GM12878 (cell line): ENCODE measurements at regions of chr9 and their contacts with region 1.

Region 1: GRCh38 chr9:127004946-127005769 is 90.6 kb downstream of the RALGPS1 start:
- DNase-seq: peak; percentile 98
- ATAC-seq: peak; percentile 85
- H3K4me3 ChIP-seq: peak overlapping the region; percentile 4; the same call in 1 of the 2 replicates
- H3K27ac ChIP-seq: peak overlapping the region; percentile 77
- H3K4me1 ChIP-seq: peaks cover 54% of the 10 kb centered on the region
- H3K27me3 ChIP-seq: no peaks in the 10 kb centered on the region
- CTCF ChIP-seq: no peak
- EP300 ChIP-seq: peak; percentile 99
- POLR2A ChIP-seq: no peak
- RAD21 ChIP-seq: peak; percentile 32

Region 2: DNA sequence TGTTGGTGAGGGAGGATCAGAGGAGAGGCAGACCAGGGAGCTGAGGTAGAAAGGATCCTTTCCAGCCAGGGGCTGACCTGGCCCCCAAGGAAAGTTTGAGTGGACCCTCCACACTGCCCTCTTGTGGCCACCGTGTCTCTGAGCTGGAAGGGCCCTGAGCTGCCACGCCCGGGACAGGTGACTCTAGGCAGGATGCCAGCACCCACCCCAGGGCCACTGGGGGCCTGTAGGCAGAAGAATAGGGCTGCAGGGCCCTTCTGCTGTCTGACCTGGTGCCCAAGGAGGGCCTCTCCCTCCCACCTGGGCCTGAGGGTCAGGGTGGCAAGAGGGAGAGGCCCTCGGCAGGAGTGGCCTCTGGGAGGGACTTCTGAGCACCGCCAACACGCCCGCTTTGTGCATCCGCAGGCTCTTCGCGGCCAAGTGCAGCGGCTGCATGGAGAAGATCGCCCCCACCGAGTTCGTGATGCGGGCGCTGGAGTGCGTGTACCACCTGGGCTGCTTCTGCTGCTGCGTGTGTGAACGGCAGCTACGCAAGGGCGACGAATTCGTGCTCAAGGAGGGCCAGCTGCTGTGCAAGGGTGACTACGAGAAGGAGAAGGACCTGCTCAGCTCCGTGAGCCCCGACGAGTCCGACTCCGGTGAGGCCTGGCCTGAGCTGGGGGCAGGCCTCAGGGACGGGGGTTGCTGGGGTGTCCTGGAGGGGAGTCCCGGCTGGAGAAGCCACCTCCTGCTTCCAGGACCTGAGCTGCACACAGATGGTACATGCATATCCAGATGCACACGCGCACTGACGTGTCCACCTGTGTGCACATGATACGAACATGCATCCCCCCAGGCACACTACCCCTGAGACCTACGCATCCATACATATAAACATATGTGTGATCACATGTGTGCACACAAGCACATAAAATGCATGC is 314.5 kb before region 1 on chr9:
- CTCF ChIA-PET with region 1: no interaction called
- POLR2A ChIA-PET with region 1: no interaction called
- RAD21 ChIA-PET with region 1: no interaction called
- SMC1A ChIA-PET with region 1: no interaction called
- in situ Hi-C with region 1: no loop called
- intact Hi-C with region 1: no loop called
- DNase-seq: no peak
- ATAC-seq: peak; percentile 92
- H3K4me3 ChIP-seq: no peak overlapping the region
- H3K27ac ChIP-seq: no peak overlapping the region
- H3K4me1 ChIP-seq: no peaks in the 10 kb centered on the region
- H3K27me3 ChIP-seq: peaks cover 0 to 2% of the 10 kb centered on the region in 2 experiments; a peak in 2 of 4 replicates
- CTCF ChIP-seq: peak; percentile 55 to 78 (median 58)
- EP300 ChIP-seq: no peak
- POLR2A ChIP-seq: no peak
- RAD21 ChIP-seq: peak; percentile 27; the same call in 1 of the 2 replicates

Region 3: DNA sequence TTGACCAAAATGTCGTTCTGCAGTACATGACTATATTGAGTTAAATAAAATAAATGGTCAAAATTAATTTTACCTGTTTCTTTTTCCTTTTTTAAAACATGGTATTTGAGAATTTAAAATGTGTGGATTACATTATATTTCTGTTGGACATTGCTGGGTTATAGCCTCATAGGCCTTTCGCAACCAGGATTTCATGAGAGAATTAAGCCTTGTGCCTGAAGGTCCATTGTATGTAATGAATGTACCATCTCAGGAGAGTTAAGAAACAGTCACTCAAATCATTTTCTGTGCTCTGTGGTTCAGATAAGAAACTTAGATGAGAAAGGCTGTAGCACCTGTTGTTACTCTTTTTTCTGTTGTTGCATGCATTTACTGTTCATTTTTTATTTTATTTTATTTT is 13.8 kb after region 1 on chr9:
- CTCF ChIA-PET with region 1: interaction called, 3 read pairs
- POLR2A ChIA-PET with region 1: interaction called, 10 read pairs
- RAD21 ChIA-PET with region 1: interaction called, 6 read pairs
- SMC1A ChIA-PET with region 1: interaction called, 17 read pairs
- in situ Hi-C with region 1: no loop called
- intact Hi-C with region 1: no loop called
- DNase-seq: no peak
- ATAC-seq: no peak
- H3K4me3 ChIP-seq: no peak overlapping the region
- H3K27ac ChIP-seq: no peak overlapping the region
- H3K4me1 ChIP-seq: peaks cover 3% of the 10 kb centered on the region; the same call in 1 of the 2 replicates
- H3K27me3 ChIP-seq: no peaks in the 10 kb centered on the region
- CTCF ChIP-seq: no peak
- EP300 ChIP-seq: no peak
- POLR2A ChIP-seq: no peak
- RAD21 ChIP-seq: no peak

Region 4: GRCh38 chr9:127049044-127049443 is 43.9 kb after region 1 on chr9:
- CTCF ChIA-PET with region 1: interaction called, 3 read pairs
- POLR2A ChIA-PET with region 1: interaction called, 3 read pairs
- RAD21 ChIA-PET with region 1: interaction called, 9 read pairs
- SMC1A ChIA-PET with region 1: interaction called, 92 read pairs
- in situ Hi-C with region 1: no loop called
- intact Hi-C with region 1: loop called (anchors 1 kb)
- DNase-seq: peak; percentile 69
- ATAC-seq: peak; percentile 81
- H3K4me3 ChIP-seq: no peak overlapping the region
- H3K27ac ChIP-seq: no peak overlapping the region
- H3K4me1 ChIP-seq: peaks cover 12% of the 10 kb centered on the region
- H3K27me3 ChIP-seq: no peaks in the 10 kb centered on the region
- CTCF ChIP-seq: peak in 2 of 3 experiments; percentile 10 to 26; a peak in 1 of 6 replicates
- EP300 ChIP-seq: no peak
- POLR2A ChIP-seq: no peak
- RAD21 ChIP-seq: peak; percentile 29

Region 5: DNA sequence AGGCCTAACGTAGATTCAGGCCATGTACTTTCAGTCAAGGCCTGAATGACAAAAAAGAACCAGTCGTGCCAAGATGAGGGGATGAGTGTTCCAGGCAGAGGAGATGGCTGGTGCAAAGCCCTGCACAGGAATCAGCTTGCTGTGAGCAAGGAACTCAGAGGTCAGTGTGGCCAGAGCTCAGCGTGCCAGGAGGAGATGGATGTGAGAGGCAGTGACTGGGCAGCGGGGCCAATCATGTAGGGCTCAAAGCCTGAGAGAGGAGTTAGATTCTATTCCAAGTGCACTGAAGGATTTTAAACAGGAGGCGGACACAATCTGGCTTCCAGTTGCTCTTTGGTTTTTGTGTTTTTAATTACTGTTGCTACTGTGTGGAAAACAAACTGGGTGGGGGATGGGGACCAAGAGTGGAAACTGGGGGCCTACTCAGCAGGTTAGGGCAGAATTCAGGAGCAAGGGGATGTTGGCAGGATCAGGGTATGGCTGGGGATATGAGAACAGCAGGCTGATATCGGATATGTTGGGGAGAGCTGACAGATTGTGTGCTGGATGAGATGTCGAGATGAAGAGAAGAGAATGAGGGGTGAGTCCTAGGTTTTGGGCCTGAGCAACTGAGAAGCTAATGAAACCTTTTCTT is 53.0 kb after region 1 on chr9:
- CTCF ChIA-PET with region 1: interaction called, 13 read pairs
- POLR2A ChIA-PET with region 1: interaction called, 9 read pairs
- RAD21 ChIA-PET with region 1: interaction called, 72 read pairs
- SMC1A ChIA-PET with region 1: interaction called, 92 read pairs
- in situ Hi-C with region 1: no loop called
- intact Hi-C with region 1: no loop called
- DNase-seq: no peak
- ATAC-seq: no peak
- H3K4me3 ChIP-seq: no peak overlapping the region
- H3K27ac ChIP-seq: no peak overlapping the region
- H3K4me1 ChIP-seq: peaks cover 5% of the 10 kb centered on the region
- H3K27me3 ChIP-seq: no peaks in the 10 kb centered on the region
- CTCF ChIP-seq: no peak
- EP300 ChIP-seq: no peak
- POLR2A ChIP-seq: no peak
- RAD21 ChIP-seq: no peak

Region 6: GRCh38 chr9:127116957-127117356 is 111.8 kb after region 1 on chr9:
- CTCF ChIA-PET with region 1: interaction called, 4 read pairs
- POLR2A ChIA-PET with region 1: interaction called, 3 read pairs
- RAD21 ChIA-PET with region 1: interaction called, 13 read pairs
- SMC1A ChIA-PET with region 1: interaction called, 16 read pairs
- in situ Hi-C with region 1: no loop called
- intact Hi-C with region 1: no loop called
- DNase-seq: no peak
- ATAC-seq: peak; percentile 50
- H3K4me3 ChIP-seq: no peak overlapping the region
- H3K27ac ChIP-seq: no peak overlapping the region
- H3K4me1 ChIP-seq: peaks cover 21% of the 10 kb centered on the region
- H3K27me3 ChIP-seq: no peaks in the 10 kb centered on the region
- CTCF ChIP-seq: no peak
- EP300 ChIP-seq: no peak
- POLR2A ChIP-seq: no peak
- RAD21 ChIP-seq: 0 out of 2 replicates have a peak, but pooled peaks have one; percentile 0

Region 7: GRCh38 chr9:127159325-127159801 is 154.2 kb after region 1 on chr9:
- CTCF ChIA-PET with region 1: interaction called, 5 read pairs
- POLR2A ChIA-PET with region 1: interaction called, 7 read pairs
- RAD21 ChIA-PET with region 1: interaction called, 157 read pairs
- SMC1A ChIA-PET with region 1: interaction called, 188 read pairs
- in situ Hi-C with region 1: no loop called
- intact Hi-C with region 1: no loop called
- DNase-seq: no peak
- ATAC-seq: peak; percentile 30; the same call in 2 of the 3 replicates
- H3K4me3 ChIP-seq: no peak overlapping the region
- H3K27ac ChIP-seq: no peak overlapping the region
- H3K4me1 ChIP-seq: peaks cover 27% of the 10 kb centered on the region
- H3K27me3 ChIP-seq: no peaks in the 10 kb centered on the region
- CTCF ChIP-seq: peak in 1 of 3 experiments; percentile 16; a peak in 1 of 6 replicates
- EP300 ChIP-seq: no peak
- POLR2A ChIP-seq: no peak
- RAD21 ChIP-seq: no peak; the same call in 1 of the 2 replicates

Region 8: DNA sequence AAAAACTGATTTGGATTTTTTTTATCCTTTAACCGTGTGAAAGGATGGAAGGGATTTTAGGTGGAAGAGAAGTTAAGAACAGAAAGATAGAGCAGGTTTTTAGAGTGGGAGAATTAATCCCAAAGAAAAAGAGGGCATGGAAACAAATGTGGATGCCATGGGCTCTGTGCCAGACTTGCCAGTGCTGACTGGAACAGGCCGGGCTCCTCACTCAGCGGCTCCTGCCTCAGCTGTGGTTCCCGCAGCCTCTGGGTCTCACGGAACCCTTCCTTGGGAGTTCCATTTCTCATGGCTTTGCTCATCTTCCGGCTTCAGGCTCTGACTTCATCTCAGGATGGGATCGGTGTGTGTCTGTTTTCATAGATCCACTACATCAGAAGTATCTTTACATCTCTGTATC is 361.4 kb after region 1 on chr9:
- CTCF ChIA-PET with region 1: no interaction called
- POLR2A ChIA-PET with region 1: no interaction called
- RAD21 ChIA-PET with region 1: no interaction called
- SMC1A ChIA-PET with region 1: no interaction called
- in situ Hi-C with region 1: no loop called
- intact Hi-C with region 1: no loop called
- DNase-seq: no peak
- ATAC-seq: no peak
- H3K4me3 ChIP-seq: no peak overlapping the region
- H3K27ac ChIP-seq: no peak overlapping the region
- H3K4me1 ChIP-seq: peaks cover under 1% of the 10 kb centered on the region; the same call in 1 of the 2 replicates
- H3K27me3 ChIP-seq: no peaks in the 10 kb centered on the region
- CTCF ChIP-seq: no peak
- EP300 ChIP-seq: no peak
- POLR2A ChIP-seq: no peak
- RAD21 ChIP-seq: no peak